ENCODE measurements at regions of chr19 and their contacts with region 1.

Region 1: GRCh38 chr19:4723367-4724187 is at the start of gene DPP9:
- DNase-seq: peak; percentile 100
- ATAC-seq: peak; percentile 87
- H3K4me3 ChIP-seq: peak within 1 kb of the TSS; percentile 99
- H3K27ac ChIP-seq: peak within 1 kb of the TSS; percentile 76
- H3K4me1 ChIP-seq: peaks cover 18% of the 10 kb centered on the region
- H3K27me3 ChIP-seq: no peaks in the 10 kb centered on the region
- CTCF ChIP-seq: peak; percentile 35; the same call in 1 of the 2 replicates
- total RNA-seq, gene DPP9: 129 and 215 TPM in 2 replicates

Region 2: DNA sequence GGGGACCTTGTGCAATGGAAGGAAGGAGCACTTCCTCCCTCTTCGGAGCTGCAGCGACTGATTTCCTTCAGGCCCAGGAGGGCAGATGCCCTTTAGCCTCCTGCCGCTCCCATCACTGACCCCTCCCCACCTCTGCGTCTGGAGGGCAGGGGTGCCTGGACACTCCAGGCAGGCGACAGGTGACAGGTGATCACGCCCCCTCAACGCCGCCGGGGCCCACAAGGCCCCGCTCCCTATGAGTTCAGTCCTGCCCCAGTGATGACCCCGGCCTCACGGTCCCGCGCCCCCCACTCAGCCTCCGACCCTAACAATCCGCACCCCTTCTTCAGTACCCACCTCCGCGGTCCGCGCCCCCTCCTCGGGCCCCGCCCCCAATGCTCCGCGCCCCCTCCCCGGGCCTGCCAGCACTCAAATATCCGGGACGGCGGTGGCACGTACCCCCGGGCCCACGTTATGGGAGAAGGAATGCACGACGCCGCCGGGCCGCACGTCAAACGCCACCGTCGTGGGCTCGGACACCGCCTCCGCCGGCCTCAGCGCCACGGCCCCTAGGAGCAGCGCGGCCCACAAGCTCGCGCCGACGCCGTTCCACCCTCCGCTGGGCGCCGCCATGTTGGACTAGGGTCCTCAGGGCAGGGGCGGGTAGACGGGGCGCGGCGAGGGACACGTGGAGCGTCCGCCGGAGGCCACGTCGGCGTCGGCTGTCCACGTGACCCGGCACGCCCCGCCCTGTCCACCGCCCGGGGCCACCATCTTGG is 53.7 kb before region 1 on chr19 and contains the start of gene MYDGF:
- CTCF ChIA-PET with region 1: no interaction called
- POLR2A ChIA-PET with region 1: no interaction called
- intact Hi-C with region 1: loop called (anchors 5 kb)
- DNase-seq: peak; percentile 90
- ATAC-seq: peak; percentile 88
- H3K4me3 ChIP-seq: peak within 1 kb of the TSS; percentile 82
- H3K27ac ChIP-seq: peak within 1 kb of the TSS; percentile 79
- H3K4me1 ChIP-seq: peaks cover 25% of the 10 kb centered on the region
- H3K27me3 ChIP-seq: no peaks in the 10 kb centered on the region
- CTCF ChIP-seq: no peak
- total RNA-seq, gene MYDGF: 426 and 474 TPM in 2 replicates

Measured in PC-3 (cell line).